Activated CD8-positive, alpha-beta T cell treated with anti-CD3 and anti-CD28 coated beads for 36 hours (primary cell): ENCODE measurements at regions of chr11 and their contacts with region 1.

Region 1: GRCh38 chr11:313787-314547 is at the start of gene IFITM1:
- DNase-seq: peak; percentile 79
- ATAC-seq: peak; percentile 45
- H3K4me3 Mint-ChIP-seq: peak within 1 kb of the TSS; percentile 83
- H3K27ac Mint-ChIP-seq: peak within 1 kb of the TSS; percentile 91
- H3K4me1 Mint-ChIP-seq: peaks cover 34% of the 10 kb centered on the region
- H3K27me3 Mint-ChIP-seq: no peaks in the 10 kb centered on the region
- CTCF ChIP-seq: no peak
- total RNA-seq, gene IFITM1: 296 to 304 TPM

Region 2: GRCh38 chr11:269146-269890 is 44.6 kb before region 1 on chr11:
- CTCF ChIA-PET with region 1: interaction called, 3 read pairs
- POLR2A ChIA-PET with region 1: interaction called, 14 read pairs
- intact Hi-C with region 1: loop called (anchors 10 kb)
- DNase-seq: peak; percentile 72
- ATAC-seq: peak; percentile 38
- H3K4me3 Mint-ChIP-seq: peak overlapping the region; percentile 89
- H3K27ac Mint-ChIP-seq: peak overlapping the region; percentile 98
- H3K4me1 Mint-ChIP-seq: peaks cover 37% of the 10 kb centered on the region
- H3K27me3 Mint-ChIP-seq: no peaks in the 10 kb centered on the region
- CTCF ChIP-seq: peak; percentile 46

Region 3: GRCh38 chr11:288328-289144 is 25.4 kb before region 1 on chr11 and contains the start of gene PGGHG:
- CTCF ChIA-PET with region 1: interaction called, 44 read pairs
- POLR2A ChIA-PET with region 1: interaction called, 31 read pairs
- intact Hi-C with region 1: no loop called
- DNase-seq: peak; percentile 56
- ATAC-seq: peak; percentile 14
- H3K4me3 Mint-ChIP-seq: peak within 1 kb of the TSS; percentile 97
- H3K27ac Mint-ChIP-seq: peak within 1 kb of the TSS; percentile 98
- H3K4me1 Mint-ChIP-seq: peaks cover 51% of the 10 kb centered on the region
- H3K27me3 Mint-ChIP-seq: no peaks in the 10 kb centered on the region
- CTCF ChIP-seq: no peak
- total RNA-seq, gene PGGHG: 298 to 308 TPM

Region 4: GRCh38 chr11:326842-327580 is 13.0 kb after region 1 on chr11:
- CTCF ChIA-PET with region 1: interaction called, 6 read pairs
- POLR2A ChIA-PET with region 1: interaction called, 41 read pairs
- intact Hi-C with region 1: no loop called
- DNase-seq: peak; percentile 94
- ATAC-seq: peak; percentile 62
- H3K4me3 Mint-ChIP-seq: peak overlapping the region; percentile 72
- H3K27ac Mint-ChIP-seq: peak overlapping the region; percentile 99
- H3K4me1 Mint-ChIP-seq: peaks cover 73% of the 10 kb centered on the region
- H3K27me3 Mint-ChIP-seq: no peaks in the 10 kb centered on the region
- CTCF ChIP-seq: no peak

Region 5: DNA sequence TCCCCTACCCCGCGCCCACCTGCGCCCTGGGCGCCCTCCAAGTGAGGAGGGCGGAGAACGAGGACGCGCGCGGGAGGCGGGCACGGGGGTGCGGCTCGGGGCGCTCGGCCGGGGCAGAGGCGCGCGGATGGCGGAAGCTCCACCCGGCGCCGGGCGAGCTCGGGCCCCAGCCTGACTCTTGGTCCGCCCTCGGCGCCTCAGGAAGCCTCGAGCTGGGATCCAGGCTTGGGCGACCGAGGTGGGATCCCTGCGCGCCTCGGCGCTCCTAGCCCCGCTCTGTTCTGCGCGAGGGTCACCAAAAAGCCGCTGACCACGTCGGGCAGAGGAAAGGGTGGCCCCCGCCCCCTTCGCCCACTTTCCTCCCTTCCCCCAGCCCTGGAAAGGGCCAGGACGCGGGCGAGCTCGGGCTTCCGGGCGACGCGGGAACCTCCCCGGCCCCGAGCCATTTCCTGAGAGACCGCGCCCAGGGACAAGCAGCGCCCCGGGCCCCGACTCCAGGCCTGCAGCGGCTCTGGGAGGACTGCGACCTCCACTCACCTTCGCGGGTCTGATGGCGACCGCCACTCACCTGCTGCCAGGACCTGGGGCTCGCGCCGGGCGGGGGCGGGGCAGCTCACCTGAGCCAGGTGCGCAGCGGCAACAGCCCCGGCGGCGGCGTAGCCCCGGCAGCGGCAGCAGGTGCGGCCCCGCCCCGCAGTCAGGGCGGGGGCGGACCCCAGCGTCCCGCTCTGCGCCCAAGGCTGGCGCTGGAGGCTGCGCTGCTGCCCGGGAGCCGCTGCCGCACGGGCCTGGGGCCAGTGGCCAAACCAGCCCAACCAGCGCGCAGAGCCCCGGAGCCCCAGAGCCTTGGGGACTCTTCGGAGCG is 103.0 kb after region 1 on chr11:
- CTCF ChIA-PET with region 1: no interaction called
- POLR2A ChIA-PET with region 1: no interaction called
- intact Hi-C with region 1: no loop called
- DNase-seq: peak; percentile 56
- ATAC-seq: peak; percentile 31
- H3K4me3 Mint-ChIP-seq: peak overlapping the region; percentile 77
- H3K27ac Mint-ChIP-seq: no peak overlapping the region
- H3K4me1 Mint-ChIP-seq: peaks cover 24% of the 10 kb centered on the region
- H3K27me3 Mint-ChIP-seq: no peaks in the 10 kb centered on the region
- CTCF ChIP-seq: no peak